AG04449 (cell line): ENCODE measurements at regions of chr10 and their contacts with region 1.

Region 1: GRCh38 chr10:73848821-73849489 is 25.4 kb downstream of the CAMK2G start:
- DNase-seq: peak; percentile 16
- H3K4me3 ChIP-seq: no peak overlapping the region
- CTCF ChIP-seq: peak; percentile 96

Region 2: GRCh38 chr10:73501651-73502050 is 347.3 kb before region 1 on chr10:
- CTCF ChIA-PET with region 1: no interaction called
- POLR2A ChIA-PET with region 1: no interaction called
- DNase-seq: no peak
- H3K4me3 ChIP-seq: no peak overlapping the region
- CTCF ChIP-seq: no peak

Region 3: GRCh38 chr10:73591935-73592699 is 256.8 kb before region 1 on chr10:
- CTCF ChIA-PET with region 1: no interaction called
- POLR2A ChIA-PET with region 1: no interaction called
- DNase-seq: no peak
- H3K4me3 ChIP-seq: no peak overlapping the region
- CTCF ChIP-seq: no peak

Region 4: DNA sequence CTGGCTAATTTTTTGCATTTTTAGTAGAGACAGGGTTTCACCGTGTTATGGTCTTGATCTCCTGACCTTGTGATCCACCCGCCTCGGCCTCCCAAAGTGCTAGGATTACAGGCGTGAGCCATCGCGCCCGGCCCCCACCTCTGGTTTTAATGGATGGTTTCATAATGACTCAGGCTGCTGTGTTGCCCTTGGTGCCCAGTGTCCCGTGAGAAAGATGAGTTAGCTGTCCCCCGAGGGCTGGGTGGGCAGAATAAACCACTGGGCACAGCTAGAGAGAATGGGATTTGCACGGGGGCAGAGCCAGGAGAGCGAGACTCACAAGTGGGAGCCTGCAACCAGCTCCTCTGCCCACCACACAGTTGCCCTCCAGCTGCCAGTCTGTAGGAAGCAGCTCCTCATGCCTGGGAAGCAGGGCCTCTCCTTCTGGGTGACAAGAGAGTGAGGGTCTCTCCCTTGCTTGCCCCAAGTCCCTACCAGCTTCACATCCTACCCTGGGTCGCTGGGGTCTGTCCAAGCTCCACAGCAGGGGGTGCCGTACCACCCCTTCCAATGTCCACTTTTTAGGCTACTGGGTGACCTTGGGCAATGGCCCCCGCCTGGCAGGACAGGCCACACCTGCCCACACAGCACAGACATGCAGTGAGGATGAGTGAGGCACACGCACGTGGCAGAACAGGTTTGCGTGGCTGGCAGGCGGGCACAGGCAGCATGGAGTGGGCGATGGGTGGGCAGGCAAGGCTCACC is 21.4 kb before region 1 on chr10:
- CTCF ChIA-PET with region 1: interaction called, 134 read pairs
- POLR2A ChIA-PET with region 1: interaction called, 3 read pairs
- DNase-seq: no peak
- H3K4me3 ChIP-seq: no peak overlapping the region
- CTCF ChIP-seq: no peak

Region 5: GRCh38 chr10:73837072-73837471 is 11.9 kb before region 1 on chr10:
- CTCF ChIA-PET with region 1: interaction called, 134 read pairs
- POLR2A ChIA-PET with region 1: no interaction called
- DNase-seq: no peak
- H3K4me3 ChIP-seq: no peak overlapping the region
- CTCF ChIP-seq: no peak

Region 6: DNA sequence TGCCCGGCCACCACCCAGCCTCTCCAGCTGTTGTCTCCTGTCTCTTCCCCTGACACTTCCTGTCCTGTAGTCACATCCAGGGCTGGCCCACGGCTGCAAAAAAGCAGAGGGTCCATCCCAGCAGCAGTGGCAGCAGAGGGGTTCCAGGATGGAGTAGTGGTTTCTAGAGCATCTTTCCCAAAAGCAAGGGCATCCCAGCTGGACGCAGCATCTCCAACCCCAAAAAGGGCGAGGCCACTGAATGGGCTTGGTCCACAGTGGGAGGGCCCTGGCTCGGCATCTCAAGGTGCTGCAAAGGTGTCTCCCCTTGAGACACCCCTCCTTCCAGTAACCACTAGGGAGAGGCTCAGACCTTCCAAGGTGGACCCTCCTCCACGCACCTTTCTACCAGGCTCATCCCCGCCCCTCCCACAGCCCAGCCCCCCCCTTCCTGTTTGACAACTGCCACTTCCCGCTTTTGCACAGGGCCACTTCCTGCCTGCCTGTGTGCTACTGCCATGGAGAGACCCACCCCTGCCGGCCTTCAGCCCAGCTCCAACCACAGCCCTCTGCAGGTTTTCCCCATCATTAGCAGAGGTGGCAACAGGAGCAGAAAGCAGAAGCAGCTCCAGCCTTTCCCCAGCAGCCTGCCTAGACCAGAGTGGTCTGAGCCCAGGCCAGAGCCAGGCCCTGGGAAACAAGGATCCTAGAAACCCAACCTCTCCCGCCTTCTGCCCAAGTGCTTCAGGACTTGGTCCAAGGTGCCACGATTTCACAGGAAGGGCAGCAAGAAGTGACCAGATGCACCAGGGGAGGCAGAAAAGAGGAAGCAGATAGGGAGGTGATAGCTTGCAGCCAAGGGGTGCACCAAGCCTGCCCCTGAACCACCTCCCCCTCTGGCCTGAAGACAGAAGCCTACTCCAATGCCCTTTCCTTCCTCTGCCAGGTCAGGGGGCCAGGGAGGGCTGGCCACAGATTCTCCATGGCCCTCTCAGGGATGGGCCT is 16.8 kb after region 1 on chr10:
- CTCF ChIA-PET with region 1: interaction called, 249 read pairs
- POLR2A ChIA-PET with region 1: no interaction called
- DNase-seq: no peak
- H3K4me3 ChIP-seq: no peak overlapping the region
- CTCF ChIP-seq: no peak

Region 7: GRCh38 chr10:74176380-74177139 is 327.6 kb after region 1 on chr10:
- CTCF ChIA-PET with region 1: no interaction called
- POLR2A ChIA-PET with region 1: no interaction called
- DNase-seq: peak; percentile 49
- H3K4me3 ChIP-seq: peak overlapping the region; percentile 89
- CTCF ChIP-seq: no peak